Right ventricle myocardium superior (tissue), 1 donor: ENCODE measurements at regions of chr1 and their contacts with region 1.

Region 1: DNA sequence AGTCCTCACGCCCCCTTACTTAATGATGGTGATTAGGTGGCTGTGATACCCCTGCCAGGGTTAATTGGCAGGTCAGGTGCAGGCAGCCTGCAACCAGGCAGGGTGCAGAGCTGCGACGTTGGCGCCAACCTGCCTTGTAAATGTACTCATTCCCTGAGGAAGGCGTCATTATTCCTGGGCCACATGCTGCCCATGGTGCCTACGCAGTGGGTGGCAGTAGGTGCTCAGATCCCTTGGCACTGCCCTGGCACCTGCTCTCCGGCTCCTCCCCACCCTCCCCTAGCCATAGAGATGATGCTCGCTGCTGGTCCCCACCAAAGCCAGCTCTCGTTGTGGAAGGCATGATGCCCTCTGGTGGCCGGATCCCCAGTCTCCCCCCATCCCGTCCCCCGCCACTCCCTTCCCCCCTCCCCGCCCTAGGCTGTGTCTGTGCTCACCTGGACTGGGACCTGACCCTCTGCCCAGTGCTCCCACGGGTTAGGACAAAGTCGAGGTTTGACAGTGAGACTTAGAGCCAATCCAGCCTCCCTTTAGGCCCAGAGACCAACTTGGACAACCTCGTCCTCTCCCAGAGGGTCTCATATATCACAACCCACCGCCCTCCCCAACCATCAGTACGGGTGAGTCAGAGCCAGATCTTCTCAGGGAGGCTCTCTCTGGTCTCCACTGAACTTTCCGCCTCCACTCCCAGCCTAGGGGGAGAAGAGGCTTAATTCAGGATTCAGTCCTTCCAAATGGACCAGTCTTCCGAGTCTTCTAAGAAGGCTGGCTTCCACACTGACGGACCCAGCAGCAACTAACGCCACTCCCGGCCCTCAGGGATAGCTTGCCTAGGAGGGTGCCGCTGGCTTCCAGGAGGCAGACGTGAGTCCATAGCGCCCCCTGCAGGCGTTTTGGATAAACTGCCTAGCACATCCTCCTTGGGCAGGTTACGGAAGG is 5.7 kb downstream of the KRTCAP2 start:
- DNase-seq: peak; percentile 92
- ATAC-seq: peak; percentile 90

Region 2: DNA sequence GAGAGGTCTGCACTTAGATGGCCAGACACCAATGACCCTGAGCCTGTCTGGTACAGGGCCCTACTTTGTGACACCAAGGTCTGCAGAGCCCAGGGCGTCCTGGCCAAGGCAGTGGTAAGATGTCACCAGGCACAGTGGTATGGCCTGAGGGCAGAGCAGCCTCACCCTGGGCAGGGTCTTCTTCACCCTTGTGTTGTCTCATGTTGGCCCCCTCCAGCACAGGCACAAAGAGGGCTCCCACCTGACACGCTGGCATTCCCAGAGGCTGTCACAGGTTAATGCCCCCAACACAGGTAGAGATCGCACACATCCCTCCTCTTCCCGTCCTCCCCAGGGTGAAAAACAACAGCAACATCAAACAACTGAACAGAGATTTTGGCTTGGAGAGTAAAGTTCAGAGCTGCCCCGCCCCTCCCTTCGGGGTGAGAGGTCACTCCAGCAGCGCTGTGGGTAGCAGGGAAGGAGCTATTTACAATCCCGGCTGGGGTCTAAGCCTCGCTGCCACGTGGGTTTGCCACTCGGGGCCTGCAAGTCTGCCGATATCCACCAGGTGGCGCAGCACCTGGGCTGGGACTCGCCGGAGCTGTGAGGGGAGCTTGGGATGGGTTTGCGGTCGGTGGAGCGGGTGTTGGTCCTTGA is 76.2 kb before region 1 on chr1:
- intact Hi-C with region 1: loop called (anchors 2 kb)
- DNase-seq: peak; percentile 89
- ATAC-seq: peak; percentile 74

Region 3: DNA sequence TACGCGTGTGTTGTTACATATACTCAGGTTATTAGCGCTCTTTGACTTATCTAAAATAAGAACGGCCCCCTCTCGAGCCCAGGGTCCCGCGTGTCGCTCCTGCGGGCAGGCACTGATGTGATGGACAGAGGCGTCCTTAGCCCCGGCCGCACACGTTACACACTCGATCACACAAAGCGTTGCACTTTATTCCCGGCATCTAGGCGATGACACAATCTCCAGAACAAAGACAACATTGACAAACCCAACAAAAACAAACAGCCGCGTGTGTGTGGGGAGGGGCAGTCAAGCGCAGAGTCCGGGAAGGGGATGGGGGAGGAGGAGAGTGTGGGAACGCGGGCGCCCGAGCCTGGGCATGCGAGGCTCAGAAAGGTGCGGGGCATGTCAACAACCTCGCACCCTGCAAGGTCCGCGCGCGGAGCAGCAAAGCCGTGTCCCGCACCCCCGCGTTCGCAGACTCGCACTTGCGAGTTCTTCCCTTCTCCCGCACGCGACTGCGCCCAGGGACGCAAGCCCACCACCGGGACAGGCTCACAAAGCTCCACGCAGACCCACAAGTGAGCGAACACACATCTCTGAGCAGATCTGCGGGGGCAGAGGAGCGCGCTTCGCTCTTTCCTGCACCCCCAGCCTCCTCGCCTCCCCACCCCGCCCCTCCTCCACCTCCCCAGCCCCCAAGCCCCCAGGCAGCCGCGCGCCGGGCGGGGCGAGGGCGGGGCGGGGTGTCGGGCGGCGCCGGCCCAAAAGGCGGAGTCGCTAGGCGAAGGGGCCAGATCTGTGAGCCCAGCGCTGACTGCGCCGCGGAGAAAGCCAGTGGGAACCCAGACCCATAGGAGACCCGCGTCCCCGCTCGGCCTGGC is 40.1 kb before region 1 on chr1 and contains the start of gene EFNA1:
- intact Hi-C with region 1: loop called (anchors 5 kb)
- DNase-seq: peak; percentile 84
- ATAC-seq: peak; percentile 79
- total RNA-seq, gene EFNA1: 41.5 TPM